ENCODE measurements at regions of chr16 and their contacts with region 1.

Region 1: DNA sequence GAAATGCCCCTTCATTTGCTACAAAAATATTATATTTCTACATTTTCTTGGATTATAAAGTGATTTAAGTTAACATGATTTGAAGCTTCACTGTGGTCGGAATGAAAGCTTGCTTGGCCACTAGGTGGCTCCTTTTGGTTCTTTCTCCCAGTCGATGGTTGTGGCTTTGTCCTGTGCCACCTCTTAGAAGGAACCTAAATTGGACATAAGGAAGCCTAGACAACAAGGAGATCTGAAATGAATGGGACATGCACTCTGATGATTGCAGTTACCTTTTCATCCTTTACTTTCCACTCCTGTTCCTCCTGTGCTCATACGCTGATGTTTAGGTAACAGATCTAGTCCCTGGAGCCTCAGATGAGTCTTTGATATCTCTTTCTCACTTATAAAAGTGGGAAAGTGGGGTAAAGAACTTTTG is 39.2 kb downstream of the FTO start:
- H3K4me3 ChIP-seq: no peak overlapping the region
- H3K27ac ChIP-seq: no peak overlapping the region
- H3K4me1 ChIP-seq: peaks cover 35% of the 10 kb centered on the region
- CTCF ChIP-seq: peak; percentile 42; the same call in 1 of the 2 replicates

Region 2: GRCh38 chr16:53726625-53727024 is 16.5 kb before region 1 on chr16:
- CTCF ChIA-PET with region 1: interaction called, 15 read pairs
- POLR2A ChIA-PET with region 1: no interaction called
- H3K4me3 ChIP-seq: no peak overlapping the region
- H3K27ac ChIP-seq: no peak overlapping the region
- H3K4me1 ChIP-seq: peaks cover 11% of the 10 kb centered on the region
- CTCF ChIP-seq: no peak

Region 3: DNA sequence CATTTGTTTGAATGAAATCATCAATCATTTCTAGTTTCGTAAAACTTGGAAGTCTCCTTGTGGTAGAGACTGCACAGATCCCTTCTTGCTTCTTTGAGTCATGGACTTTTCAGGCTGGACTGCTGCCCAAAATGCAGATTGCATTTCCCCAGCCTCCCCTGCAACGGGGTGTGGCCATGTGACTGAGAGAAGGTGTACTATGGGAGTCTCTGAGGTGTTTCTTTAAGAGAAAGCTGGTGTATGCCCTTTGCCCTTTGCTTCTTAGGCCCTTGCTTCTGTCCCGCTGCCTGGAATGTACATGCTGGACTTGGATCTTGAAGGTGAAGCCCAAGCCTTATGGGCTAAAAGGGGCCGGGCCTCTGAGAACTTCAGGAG is 12.4 kb after region 1 on chr16:
- CTCF ChIA-PET with region 1: interaction called, 63 read pairs
- POLR2A ChIA-PET with region 1: no interaction called
- H3K4me3 ChIP-seq: no peak overlapping the region
- H3K27ac ChIP-seq: peak overlapping the region; percentile 84
- H3K4me1 ChIP-seq: peaks cover 36% of the 10 kb centered on the region
- CTCF ChIP-seq: no peak

Region 4: DNA sequence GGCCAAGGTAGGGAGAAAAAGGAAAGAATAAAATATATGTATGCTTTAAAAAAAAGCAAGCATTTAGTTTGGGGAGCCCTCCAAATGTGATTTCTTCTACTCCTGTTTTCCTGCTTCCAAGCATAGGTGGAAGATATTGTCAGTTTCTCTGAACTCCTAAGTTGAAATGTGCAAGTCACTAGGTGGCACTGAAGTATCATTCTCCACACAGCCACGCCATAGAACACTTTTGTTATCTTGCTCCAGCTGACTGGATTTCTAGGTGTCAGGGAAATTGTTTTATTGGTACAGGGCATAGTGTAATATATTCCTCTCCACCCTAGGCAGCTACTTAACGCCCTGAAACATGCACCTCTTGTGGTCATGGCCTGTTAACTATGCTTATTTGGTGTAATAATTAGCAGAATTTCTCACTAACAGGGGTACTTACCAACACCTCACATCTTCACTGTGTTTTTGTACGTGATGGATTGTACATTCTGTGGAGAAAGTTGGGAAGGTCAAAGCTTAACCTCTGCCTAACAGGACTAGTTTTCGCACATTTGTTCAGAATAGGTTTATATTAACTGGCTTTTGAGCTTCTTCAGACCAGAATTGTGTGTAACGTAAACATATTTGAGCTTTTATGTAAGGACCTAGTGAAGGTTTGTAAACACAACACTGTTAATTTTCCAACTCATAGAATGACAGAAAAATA is 30.1 kb after region 1 on chr16:
- CTCF ChIA-PET with region 1: interaction called, 42 read pairs
- POLR2A ChIA-PET with region 1: interaction called, 4 read pairs
- H3K4me3 ChIP-seq: no peak overlapping the region
- H3K27ac ChIP-seq: no peak overlapping the region
- H3K4me1 ChIP-seq: peaks cover 21% of the 10 kb centered on the region
- CTCF ChIP-seq: peak; percentile 91